ENCODE measurements at regions of chr14 and their contacts with region 1.

Region 1: GRCh38 chr14:73644531-73645247 is at the start of gene DNAL1:
- DNase-seq: peak; percentile 96 to 98
- ATAC-seq: peak; percentile 100
- H3K4me3 ChIP-seq: peak within 1 kb of the TSS; percentile 55 to 70
- H3K27ac ChIP-seq: peak within 1 kb of the TSS; percentile 7 to 39
- H3K4me1 ChIP-seq: no peaks in the 10 kb centered on the region
- H3K27me3 ChIP-seq: no peaks in the 10 kb centered on the region
- total RNA-seq, gene DNAL1: 13.0 to 17.2 TPM

Region 2: GRCh38 chr14:73368616-73369015 is 276.1 kb before region 1 on chr14:
- intact Hi-C with region 1: no loop called
- DNase-seq: no peak
- ATAC-seq: no peak
- H3K4me3 ChIP-seq: no peak overlapping the region
- H3K27ac ChIP-seq: no peak overlapping the region
- H3K4me1 ChIP-seq: no peaks in the 10 kb centered on the region
- H3K27me3 ChIP-seq: no peaks in the 10 kb centered on the region

Region 3: DNA sequence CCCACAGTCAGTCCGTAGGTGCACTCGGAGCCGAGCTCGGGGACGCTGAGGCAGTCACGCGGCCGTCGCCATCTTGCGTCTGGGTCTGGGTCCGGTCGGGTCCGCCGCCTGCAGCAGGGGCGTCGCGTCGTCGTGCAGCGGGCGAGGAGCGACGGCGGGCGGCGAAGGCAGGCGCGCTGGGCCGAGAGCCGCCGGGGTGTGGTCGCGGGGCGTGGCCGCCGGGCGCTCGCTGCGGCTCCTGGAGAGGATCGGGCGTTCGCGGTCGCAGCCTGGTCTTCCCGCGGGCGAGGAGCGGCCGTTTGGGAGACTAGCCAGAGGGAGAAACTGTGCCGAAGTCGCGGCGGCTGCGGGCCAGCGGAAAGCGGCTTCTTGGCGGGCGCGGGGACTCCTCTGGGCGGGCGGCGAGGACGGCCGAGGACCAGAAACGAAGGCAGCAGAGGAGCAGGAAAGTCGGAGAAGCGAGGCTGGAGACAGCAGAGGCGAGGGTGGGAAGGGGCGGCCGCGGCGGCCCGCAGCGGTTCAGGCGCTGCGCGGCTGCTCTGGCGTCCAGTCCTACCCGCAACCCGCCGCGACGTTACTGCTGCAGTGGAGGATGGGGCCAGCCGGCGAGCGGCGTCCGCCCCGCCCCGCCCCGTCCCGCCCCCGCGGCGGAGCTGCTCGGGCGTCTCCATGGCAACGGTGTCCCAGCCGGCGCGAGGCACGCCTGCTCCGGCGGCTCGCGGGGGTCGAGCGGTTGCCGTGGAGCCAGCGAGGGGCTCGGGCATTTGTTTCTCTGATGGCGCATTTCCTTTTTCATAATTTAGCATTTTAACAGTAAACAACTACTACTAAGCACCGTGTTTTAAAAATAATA is 69.3 kb after region 1 on chr14 and contains the start of gene PNMA1:
- intact Hi-C with region 1: loop called (anchors 5 to 10 kb)
- DNase-seq: peak; percentile 92 to 95
- ATAC-seq: peak; percentile 92
- H3K4me3 ChIP-seq: peak within 1 kb of the TSS; percentile 59 to 89
- H3K27ac ChIP-seq: peak within 1 kb of the TSS; percentile 37 to 87
- H3K4me1 ChIP-seq: no peaks in the 10 kb centered on the region
- H3K27me3 ChIP-seq: no peaks in the 10 kb centered on the region
- total RNA-seq, gene PNMA1: 36.7 to 45.5 TPM

Measured in aorta (tissue), 5 donors.